Panc1 (cell line): ENCODE measurements at regions of chr19 and their contacts with region 1.

Region 1: DNA sequence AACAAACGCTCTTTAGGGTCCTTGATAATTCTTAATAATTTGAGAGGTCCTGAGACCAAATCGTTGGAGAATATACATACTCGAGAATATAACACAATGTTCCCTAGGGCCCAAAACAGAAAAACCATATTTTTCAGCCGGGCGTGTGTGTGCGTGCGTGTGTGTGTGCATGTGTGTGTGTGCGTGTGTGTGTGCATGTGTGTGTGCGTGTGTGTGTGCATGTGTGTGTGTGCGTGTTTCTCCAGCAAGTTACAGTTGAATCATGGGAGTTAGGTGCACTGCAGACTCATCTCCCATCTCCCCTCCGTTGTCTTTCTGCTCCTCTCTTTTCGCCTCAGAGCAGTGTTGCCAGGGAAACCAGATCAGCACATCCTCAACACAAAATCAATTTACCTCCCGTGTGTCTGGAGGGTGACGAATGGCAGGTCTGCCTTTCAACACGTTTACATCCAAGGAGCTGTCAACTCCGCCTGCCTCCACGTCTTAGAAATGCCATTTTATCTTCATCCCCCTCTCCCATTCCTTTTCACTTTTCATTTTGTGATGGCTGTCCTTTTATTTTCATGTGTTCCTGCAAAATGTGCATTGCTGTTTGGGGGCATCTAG is 8.3 kb upstream of the PNMA8B start:
- DNase-seq: no peak
- ATAC-seq: no peak
- H3K4me3 ChIP-seq: no peak overlapping the region
- H3K27ac ChIP-seq: no peak overlapping the region
- H3K4me1 ChIP-seq: no peaks in the 10 kb centered on the region
- H3K27me3 ChIP-seq: no peaks in the 10 kb centered on the region
- CTCF ChIP-seq: no peak

Region 2: DNA sequence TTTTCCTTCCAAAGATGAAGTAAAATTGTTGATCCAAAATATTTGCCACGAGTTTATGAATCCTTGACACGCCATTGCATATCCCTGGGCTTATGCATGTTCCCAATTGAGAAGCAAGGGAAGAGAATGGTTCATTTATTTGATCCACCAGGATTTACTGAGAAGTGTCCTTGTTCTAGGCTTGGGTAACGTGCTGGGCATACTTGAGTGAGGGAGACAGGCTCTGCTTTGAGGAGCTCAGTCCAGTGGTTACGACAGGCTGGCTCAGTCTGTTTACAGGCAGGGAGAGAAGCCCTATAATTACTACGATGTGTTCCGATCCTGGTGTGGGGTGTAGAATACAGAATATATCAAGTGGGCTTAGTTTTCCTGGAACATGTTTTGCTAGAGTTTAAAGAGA is 68.9 kb before region 1 on chr19:
- CTCF ChIA-PET with region 1: no interaction called
- POLR2A ChIA-PET with region 1: interaction called, 12 read pairs
- in situ Hi-C with region 1: no loop called
- intact Hi-C with region 1: no loop called
- DNase-seq: no peak
- ATAC-seq: no peak
- H3K4me3 ChIP-seq: no peak overlapping the region
- H3K27ac ChIP-seq: no peak overlapping the region
- H3K4me1 ChIP-seq: no peaks in the 10 kb centered on the region
- H3K27me3 ChIP-seq: no peaks in the 10 kb centered on the region
- CTCF ChIP-seq: no peak

Region 3: DNA sequence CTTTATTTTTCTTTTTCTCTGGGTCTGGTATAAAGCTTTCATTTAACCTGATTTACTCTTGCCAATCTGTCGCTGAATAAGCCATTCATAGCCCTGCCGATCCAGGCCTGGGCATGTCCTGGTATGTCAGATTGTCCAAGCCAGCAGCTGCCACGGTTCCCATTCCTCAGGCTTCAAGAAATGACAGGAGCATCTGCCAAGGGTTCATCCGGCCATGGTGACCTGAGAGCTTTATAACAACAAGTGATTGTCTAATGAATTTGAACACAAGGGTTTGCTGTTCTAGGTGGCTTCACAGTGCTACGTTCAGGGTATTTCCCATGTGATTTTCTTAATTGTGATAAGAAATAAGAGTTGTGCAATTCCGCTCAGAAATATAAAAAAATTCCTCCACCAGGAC is 52.6 kb before region 1 on chr19:
- CTCF ChIA-PET with region 1: no interaction called
- POLR2A ChIA-PET with region 1: no interaction called
- in situ Hi-C with region 1: no loop called
- intact Hi-C with region 1: no loop called
- DNase-seq: no peak
- ATAC-seq: no peak
- H3K4me3 ChIP-seq: no peak overlapping the region
- H3K27ac ChIP-seq: no peak overlapping the region
- H3K4me1 ChIP-seq: no peaks in the 10 kb centered on the region
- H3K27me3 ChIP-seq: no peaks in the 10 kb centered on the region
- CTCF ChIP-seq: no peak